HAP-1 (cell line): ENCODE measurements at regions of chr1 and their contacts with region 1.

Region 1: GRCh38 chr1:153990468-153991150 is at the start of gene RPS27:
- DNase-seq: peak; percentile 94 to 97
- H3K4me3 ChIP-seq: peak within 1 kb of the TSS; percentile 95
- H3K4me1 ChIP-seq: peaks cover 23% of the 10 kb centered on the region
- H3K27me3 ChIP-seq: no peaks in the 10 kb centered on the region

Region 2: DNA sequence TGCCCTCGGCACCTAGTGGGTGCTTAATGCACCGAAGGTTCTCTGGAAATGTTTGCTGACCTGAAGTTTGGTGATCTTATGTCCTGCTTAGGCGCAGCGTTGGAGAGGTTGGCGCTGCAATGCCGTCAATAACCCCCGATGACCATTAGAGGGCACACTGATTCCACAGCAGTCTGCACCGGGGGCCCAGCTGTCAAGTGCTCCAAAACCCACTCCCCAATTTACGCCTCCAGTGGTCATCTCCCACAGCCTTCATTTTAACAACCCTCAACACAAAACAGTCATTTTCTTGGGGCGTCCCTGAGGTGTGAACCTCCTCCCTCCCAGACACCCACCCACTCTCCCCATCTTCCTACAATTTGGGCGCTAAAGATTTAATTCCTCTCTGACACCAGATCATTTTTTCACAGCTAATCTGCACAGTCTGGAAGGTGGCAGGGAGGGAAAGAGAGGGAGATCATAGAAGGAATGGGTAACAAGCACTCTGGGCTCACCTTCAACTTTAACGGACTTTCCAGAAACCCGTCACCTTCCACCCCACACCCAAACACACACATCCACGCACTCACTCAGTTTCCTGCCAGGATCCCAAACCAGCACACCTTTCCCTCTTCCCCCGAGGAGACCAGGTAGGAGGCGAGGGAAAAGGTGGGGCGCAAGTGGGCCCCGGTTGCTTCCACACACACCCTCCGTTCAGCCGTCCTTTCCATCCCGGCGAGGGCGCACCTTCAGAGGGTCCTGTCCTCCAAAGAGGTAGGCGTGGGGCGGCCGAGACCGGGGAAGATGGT is 312.7 kb before region 1 on chr1:
- in situ Hi-C with region 1: loop called (anchors 5 kb)
- DNase-seq: peak; percentile 17 to 69
- H3K4me3 ChIP-seq: no peak overlapping the region
- H3K4me1 ChIP-seq: no peaks in the 10 kb centered on the region
- H3K27me3 ChIP-seq: peaks cover 2% of the 10 kb centered on the region

Region 3: DNA sequence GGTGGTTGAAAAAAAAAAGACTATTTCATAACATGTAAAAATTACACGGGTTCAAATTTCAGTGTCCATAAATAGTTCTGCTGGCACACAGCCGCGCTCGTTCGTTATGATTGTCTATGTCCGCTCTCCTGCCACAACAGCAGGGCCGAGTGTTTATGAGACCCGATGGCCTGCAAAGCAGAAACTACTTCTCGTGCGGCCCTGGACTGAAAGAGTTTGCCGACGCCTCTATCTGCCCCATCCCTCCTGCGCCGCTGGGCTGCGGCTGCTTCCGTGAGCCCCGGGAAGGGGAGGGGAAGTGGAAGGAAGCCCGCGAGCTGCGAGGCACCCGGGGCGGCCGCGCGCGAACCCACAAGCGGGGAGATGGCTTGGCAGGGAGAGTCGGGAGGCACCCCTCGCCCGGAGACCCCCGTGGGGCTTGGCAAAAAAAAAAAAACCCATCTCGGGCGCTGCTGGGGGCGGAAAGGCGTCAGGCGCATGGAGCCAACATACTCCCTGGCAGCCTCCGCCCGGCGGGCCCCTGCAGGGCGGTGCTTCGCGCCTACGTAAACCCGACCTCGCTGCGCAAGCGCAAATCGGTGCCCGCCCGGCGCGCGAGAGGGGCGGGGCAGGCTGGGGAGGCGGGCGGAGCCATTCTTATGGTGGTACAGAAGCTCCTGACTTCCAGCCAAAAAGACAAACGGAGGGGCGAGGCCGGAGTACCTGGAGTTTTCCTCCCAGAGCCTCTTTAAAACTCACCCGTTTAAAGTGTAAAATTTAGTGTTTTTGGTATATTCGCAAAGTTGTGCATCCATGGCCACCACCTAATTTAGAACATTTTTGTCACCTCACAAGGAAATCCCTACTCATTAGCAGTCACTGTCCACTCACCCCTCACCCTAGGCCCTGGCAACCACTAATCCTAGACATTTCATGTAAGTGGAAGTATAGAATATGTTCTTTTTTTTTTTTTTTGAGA is 207.1 kb before region 1 on chr1:
- in situ Hi-C with region 1: loop called (anchors 25 kb)
- DNase-seq: peak; percentile 90 to 95
- H3K4me3 ChIP-seq: peak overlapping the region; percentile 52
- H3K4me1 ChIP-seq: peaks cover 6% of the 10 kb centered on the region
- H3K27me3 ChIP-seq: no peaks in the 10 kb centered on the region

Region 4: DNA sequence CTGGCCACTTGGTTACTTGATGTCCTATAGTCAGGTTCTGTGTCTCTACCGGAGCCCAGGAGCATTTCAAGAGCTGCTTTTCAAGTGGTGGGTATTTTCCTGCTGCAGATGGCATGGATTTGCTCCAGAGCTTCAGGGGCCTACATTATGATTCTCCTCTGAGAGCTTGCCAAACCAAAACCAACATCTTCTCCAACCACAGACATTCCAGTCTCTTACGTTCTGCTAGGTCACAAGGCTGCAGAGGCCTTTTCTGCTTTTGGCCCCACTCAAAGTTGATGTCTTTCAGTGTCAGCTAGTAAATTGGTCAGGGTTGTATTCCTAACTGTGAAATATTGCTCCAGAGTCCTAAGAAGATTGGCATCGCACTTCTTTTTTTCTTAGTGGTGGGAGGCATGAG is 315.5 kb after region 1 on chr1:
- in situ Hi-C with region 1: no loop called
- DNase-seq: no peak
- H3K4me3 ChIP-seq: no peak overlapping the region
- H3K4me1 ChIP-seq: no peaks in the 10 kb centered on the region
- H3K27me3 ChIP-seq: no peaks in the 10 kb centered on the region